Mammary epithelial cell (primary cell): ENCODE measurements at regions of chr18 and their contacts with region 1.

Region 1: GRCh38 chr18:59249205-59249774 is 24.0 kb downstream of the RAX start:
- DNase-seq: peak; percentile 52
- H3K4me3 ChIP-seq: no peak overlapping the region
- H3K27ac ChIP-seq: no peak overlapping the region
- H3K4me1 ChIP-seq: no peaks in the 10 kb centered on the region
- H3K27me3 ChIP-seq: peaks cover 3% of the 10 kb centered on the region
- CTCF ChIP-seq: peak; percentile 73 to 84

Region 2: DNA sequence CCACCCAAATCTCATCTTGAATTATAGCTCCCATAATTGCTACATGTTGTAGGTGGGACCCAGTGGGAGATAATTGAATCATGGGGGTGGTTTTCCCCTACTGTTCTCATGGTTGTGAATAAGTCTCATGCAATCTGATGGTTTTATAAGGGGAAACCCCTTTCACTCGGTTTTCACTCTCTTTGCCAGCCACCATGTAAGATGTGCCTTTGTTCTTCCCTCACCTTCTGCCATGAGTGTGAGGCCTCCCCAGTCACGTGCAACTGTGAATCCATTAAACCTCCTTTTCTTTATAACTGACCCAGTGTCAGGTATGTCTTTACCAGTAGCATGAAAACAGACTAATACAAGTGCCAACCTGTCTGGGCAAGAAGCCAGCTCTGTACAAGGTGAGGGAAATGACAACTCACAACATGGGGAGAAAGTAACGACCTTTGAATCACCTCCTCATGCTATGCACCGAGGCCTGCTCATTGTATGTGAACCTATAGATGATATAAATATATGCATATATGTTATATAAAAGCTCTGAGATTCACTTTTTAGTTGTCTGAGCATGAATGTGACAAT is 782.6 kb before region 1 on chr18:
- CTCF ChIA-PET with region 1: no interaction called
- dilution Hi-C with region 1: no loop called
- in situ Hi-C with region 1: no loop called
- intact Hi-C with region 1: no loop called
- DNase-seq: peak; percentile 80
- H3K4me3 ChIP-seq: no peak overlapping the region
- H3K27ac ChIP-seq: no peak overlapping the region
- H3K4me1 ChIP-seq: peaks cover 25% of the 10 kb centered on the region
- H3K27me3 ChIP-seq: no peaks in the 10 kb centered on the region
- CTCF ChIP-seq: no peak

Region 3: GRCh38 chr18:59085797-59086196 is 163.5 kb before region 1 on chr18:
- CTCF ChIA-PET with region 1: no interaction called
- dilution Hi-C with region 1: no loop called
- in situ Hi-C with region 1: no loop called
- intact Hi-C with region 1: loop called (anchors 5 kb)
- DNase-seq: no peak
- H3K4me3 ChIP-seq: no peak overlapping the region
- H3K27ac ChIP-seq: no peak overlapping the region
- H3K4me1 ChIP-seq: no peaks in the 10 kb centered on the region
- H3K27me3 ChIP-seq: no peaks in the 10 kb centered on the region
- CTCF ChIP-seq: no peak

Region 4: GRCh38 chr18:59200787-59201186 is 48.5 kb before region 1 on chr18:
- CTCF ChIA-PET with region 1: no interaction called
- dilution Hi-C with region 1: no loop called
- in situ Hi-C with region 1: no loop called
- intact Hi-C with region 1: loop called (anchors 2 kb)
- DNase-seq: peak; percentile 15
- H3K4me3 ChIP-seq: no peak overlapping the region
- H3K27ac ChIP-seq: no peak overlapping the region
- H3K4me1 ChIP-seq: no peaks in the 10 kb centered on the region
- H3K27me3 ChIP-seq: peaks cover 4% of the 10 kb centered on the region
- CTCF ChIP-seq: peak; percentile 25 to 44

Region 5: GRCh38 chr18:59268721-59269562 is 19.7 kb after region 1 on chr18:
- CTCF ChIA-PET with region 1: no interaction called
- dilution Hi-C with region 1: no loop called
- in situ Hi-C with region 1: no loop called
- intact Hi-C with region 1: loop called (anchors 1 kb)
- DNase-seq: no peak
- H3K4me3 ChIP-seq: peak overlapping the region in 2 of 3 experiments; percentile 29 to 30
- H3K27ac ChIP-seq: no peak overlapping the region
- H3K4me1 ChIP-seq: peaks cover 44% of the 10 kb centered on the region
- H3K27me3 ChIP-seq: peaks cover 96% of the 10 kb centered on the region
- CTCF ChIP-seq: peak in 1 of 2 donors; percentile 10

Region 6: GRCh38 chr18:59300676-59301285 is 51.5 kb after region 1 on chr18:
- CTCF ChIA-PET with region 1: interaction called, 4 read pairs
- dilution Hi-C with region 1: no loop called
- in situ Hi-C with region 1: no loop called
- intact Hi-C with region 1: loop called (anchors 2 kb)
- DNase-seq: peak; percentile 75
- H3K4me3 ChIP-seq: no peak overlapping the region
- H3K27ac ChIP-seq: no peak overlapping the region
- H3K4me1 ChIP-seq: peaks cover 9% of the 10 kb centered on the region
- H3K27me3 ChIP-seq: no peaks in the 10 kb centered on the region
- CTCF ChIP-seq: no peak

Region 7: GRCh38 chr18:60421356-60422118 is 1172.2 kb after region 1 on chr18:
- CTCF ChIA-PET with region 1: interaction called, 10 read pairs
- dilution Hi-C with region 1: no loop called
- in situ Hi-C with region 1: no loop called
- intact Hi-C with region 1: no loop called
- DNase-seq: no peak
- H3K4me3 ChIP-seq: no peak overlapping the region
- H3K27ac ChIP-seq: no peak overlapping the region
- H3K4me1 ChIP-seq: no peaks in the 10 kb centered on the region
- H3K27me3 ChIP-seq: no peaks in the 10 kb centered on the region
- CTCF ChIP-seq: no peak